ENCODE measurements at regions of chr9 and their contacts with region 1.

Region 1: GRCh38 chr9:95510709-95511615 is 5.8 kb downstream of the PTCH1 start:
- DNase-seq: peak; percentile 82
- H3K4me3 Mint-ChIP-seq: peak overlapping the region; percentile 88
- H3K27ac Mint-ChIP-seq: peak overlapping the region; percentile 81
- H3K4me1 Mint-ChIP-seq: peaks cover 30% of the 10 kb centered on the region
- H3K27me3 Mint-ChIP-seq: peaks cover 46% of the 10 kb centered on the region

Region 2: GRCh38 chr9:95341293-95341962 is 169.5 kb before region 1 on chr9:
- intact Hi-C with region 1: loop called (anchors 10 kb)
- DNase-seq: no peak
- H3K4me3 Mint-ChIP-seq: no peak overlapping the region
- H3K27ac Mint-ChIP-seq: no peak overlapping the region
- H3K4me1 Mint-ChIP-seq: peaks cover 14% of the 10 kb centered on the region
- H3K27me3 Mint-ChIP-seq: peaks cover 27% of the 10 kb centered on the region

Region 3: DNA sequence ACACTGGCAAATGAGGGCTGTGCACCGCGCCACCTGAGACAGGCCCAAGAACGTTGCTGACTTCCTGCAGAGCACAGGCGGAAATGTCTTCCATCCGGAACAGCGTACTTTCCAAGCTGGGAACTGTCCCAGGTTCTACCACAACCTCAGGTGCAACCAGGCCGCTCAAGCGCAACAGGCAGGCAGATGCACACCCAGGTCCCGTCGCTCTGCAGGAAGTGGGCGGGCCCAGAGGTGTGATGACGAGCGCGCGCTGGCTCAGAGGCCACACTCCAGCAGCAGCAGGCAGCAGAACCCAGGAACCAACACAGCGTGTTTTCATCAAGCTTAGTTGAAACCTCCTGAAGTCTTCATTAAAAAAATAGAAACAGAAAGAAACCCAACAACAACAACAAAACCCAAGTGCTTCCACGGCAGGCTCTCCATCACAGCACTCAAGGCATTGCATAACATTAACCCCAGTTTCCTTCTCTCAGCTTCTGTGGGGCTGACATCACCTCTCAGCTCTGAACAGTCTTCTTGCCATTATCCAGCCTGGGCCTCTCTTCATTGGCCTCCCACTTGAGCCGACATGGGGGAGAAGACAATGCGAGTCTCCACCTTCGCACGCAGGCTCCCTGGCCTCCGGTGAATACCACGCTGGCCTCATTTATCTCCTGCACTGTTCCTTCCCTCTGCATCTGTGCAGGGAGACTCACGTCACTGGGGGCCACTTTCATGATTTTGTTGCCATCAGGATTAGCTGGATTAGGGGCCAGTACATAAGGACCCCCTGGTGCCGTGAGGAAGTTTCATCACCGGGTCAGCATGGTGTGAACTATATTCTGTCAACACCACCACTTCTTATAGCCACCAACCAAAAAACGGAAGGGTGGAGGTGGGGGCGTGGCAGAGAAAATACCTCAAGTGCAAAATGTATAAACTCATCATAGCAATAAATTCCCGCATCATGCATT is 16.3 kb before region 1 on chr9:
- intact Hi-C with region 1: loop called (anchors 1 kb)
- DNase-seq: peak; percentile 79
- H3K4me3 Mint-ChIP-seq: peak overlapping the region; percentile 58
- H3K27ac Mint-ChIP-seq: peak overlapping the region; percentile 71
- H3K4me1 Mint-ChIP-seq: peaks cover 30% of the 10 kb centered on the region
- H3K27me3 Mint-ChIP-seq: peaks cover 24% of the 10 kb centered on the region

Region 4: DNA sequence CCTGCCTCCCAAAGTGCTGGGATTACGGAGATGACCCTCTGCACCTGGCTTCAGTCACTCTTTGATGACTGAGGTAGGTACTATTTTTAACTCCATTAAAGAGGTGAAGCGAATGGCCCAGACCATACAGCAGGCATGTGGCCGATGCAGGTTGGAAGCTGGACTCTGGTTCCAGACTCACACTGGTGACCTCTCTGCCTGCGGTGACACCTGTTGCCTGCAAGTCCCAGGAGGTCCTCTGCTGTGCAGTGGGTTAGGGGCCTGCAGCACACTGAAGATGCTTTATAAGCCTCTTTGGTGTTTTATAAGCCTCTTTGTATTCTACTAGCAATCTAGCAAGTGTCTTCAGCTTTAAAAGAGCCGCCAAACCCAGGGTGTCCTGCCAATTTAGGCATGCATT is 55.0 kb after region 1 on chr9:
- intact Hi-C with region 1: no loop called
- DNase-seq: no peak
- H3K4me3 Mint-ChIP-seq: no peak overlapping the region
- H3K27ac Mint-ChIP-seq: no peak overlapping the region
- H3K4me1 Mint-ChIP-seq: peaks cover 8% of the 10 kb centered on the region
- H3K27me3 Mint-ChIP-seq: peaks cover 19% of the 10 kb centered on the region

Region 5: DNA sequence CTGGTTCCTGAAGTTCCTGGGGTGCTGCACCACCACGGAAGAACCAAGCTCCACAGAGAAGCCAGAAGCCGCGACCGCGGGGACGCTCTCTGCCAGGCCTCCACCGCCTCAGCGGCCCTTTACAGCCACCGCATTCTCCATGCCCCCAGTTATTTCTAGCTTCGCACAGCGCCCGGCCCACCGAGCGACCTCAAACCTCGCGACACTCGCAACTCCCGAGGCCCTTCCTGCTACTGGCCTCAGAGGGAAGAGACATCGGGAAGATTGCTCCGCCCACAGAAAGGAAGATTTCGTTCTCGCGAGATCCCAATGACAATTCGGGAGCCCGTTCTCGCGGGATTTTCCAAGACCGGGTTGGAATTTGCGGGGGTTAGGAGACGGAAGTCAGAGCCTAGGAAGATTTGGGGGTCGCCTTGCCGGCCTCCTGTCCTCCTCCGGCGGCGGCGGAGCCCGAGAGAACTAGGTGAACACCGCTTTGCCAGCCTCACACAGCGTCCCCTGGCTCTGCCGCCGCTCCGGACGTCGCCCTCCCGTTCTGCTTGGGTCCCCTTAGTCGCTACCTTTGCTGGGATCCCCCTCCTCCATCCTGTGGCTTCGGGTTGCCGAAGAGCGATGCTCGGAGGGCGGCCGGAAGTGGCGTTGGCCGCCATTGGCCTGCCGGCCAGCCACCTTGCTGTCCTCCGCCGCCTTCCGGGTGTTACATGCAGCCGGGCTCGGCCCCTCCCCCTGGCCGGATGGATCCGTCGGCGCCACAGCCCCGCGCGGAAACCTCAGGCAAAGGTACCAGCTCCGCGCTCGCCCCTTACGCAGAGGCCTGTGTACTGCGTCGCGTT is 364.6 kb after region 1 on chr9 and contains the start of gene ERCC6L2:
- intact Hi-C with region 1: loop called (anchors 5 kb)
- DNase-seq: peak; percentile 91
- H3K4me3 Mint-ChIP-seq: no peak within 1 kb of the TSS
- H3K27ac Mint-ChIP-seq: no peak within 1 kb of the TSS
- H3K4me1 Mint-ChIP-seq: peaks cover 30% of the 10 kb centered on the region
- H3K27me3 Mint-ChIP-seq: no peaks in the 10 kb centered on the region
- total RNA-seq, gene ERCC6L2: 28.2 and 33.0 TPM in 2 replicates

Region 6: GRCh38 chr9:96150324-96151227 is 639.6 kb after region 1 on chr9:
- intact Hi-C with region 1: loop called (anchors 5 kb)
- DNase-seq: peak; percentile 52
- H3K4me3 Mint-ChIP-seq: peak overlapping the region; percentile 44
- H3K27ac Mint-ChIP-seq: peak overlapping the region; percentile 74
- H3K4me1 Mint-ChIP-seq: peaks cover 41% of the 10 kb centered on the region
- H3K27me3 Mint-ChIP-seq: peaks cover 9% of the 10 kb centered on the region

Measured in activated T-helper 2 cell treated with anti-CD3 and anti-CD28 coated beads, Interferon-gamma antibody, Interleukin-2, Interleukin-4, amounts not matched to agents 10 μg/mL and 5 μg/mL and 100 μg/mL, durations not matched to agents 14 hours and 24 hours and 36 hours (primary cell).